ENCODE measurements at regions of chr19 and their contacts with region 1.

Region 1: GRCh38 chr19:58305065-58305931 is at the start of gene ERVK3-1:
- DNase-seq: peak; percentile 84 to 99 (median 92)
- ATAC-seq: peak; percentile 96
- H3K4me3 ChIP-seq: peak within 1 kb of the TSS; percentile 96
- H3K4me3 Mint-ChIP-seq: peak within 1 kb of the TSS; percentile 95
- H3K27ac ChIP-seq: peak within 1 kb of the TSS; percentile 93 to 97
- H3K27ac Mint-ChIP-seq: peak within 1 kb of the TSS; percentile 95
- H3K4me1 ChIP-seq: peaks cover 21% of the 10 kb centered on the region
- H3K4me1 Mint-ChIP-seq: peaks cover 52% of the 10 kb centered on the region
- H3K27me3 ChIP-seq: no peaks in the 10 kb centered on the region
- H3K27me3 Mint-ChIP-seq: no peaks in the 10 kb centered on the region
- CTCF ChIP-seq: no peak
- total RNA-seq, gene ERVK3-1: 150 to 153 TPM

Region 2: GRCh38 chr19:58067240-58067912 is 237.9 kb before region 1 on chr19:
- CTCF ChIA-PET with region 1: no interaction called
- POLR2A ChIA-PET with region 1: no interaction called
- intact Hi-C with region 1: no loop called
- DNase-seq: no peak
- ATAC-seq: no peak
- H3K4me3 ChIP-seq: no peak overlapping the region
- H3K4me3 Mint-ChIP-seq: no peak overlapping the region
- H3K27ac ChIP-seq: no peak overlapping the region
- H3K27ac Mint-ChIP-seq: no peak overlapping the region
- H3K4me1 ChIP-seq: no peaks in the 10 kb centered on the region
- H3K4me1 Mint-ChIP-seq: no peaks in the 10 kb centered on the region
- H3K27me3 ChIP-seq: no peaks in the 10 kb centered on the region
- H3K27me3 Mint-ChIP-seq: no peaks in the 10 kb centered on the region
- CTCF ChIP-seq: no peak

Region 3: GRCh38 chr19:58278157-58279041 is 26.9 kb before region 1 on chr19 and contains the start of gene ZNF8:
- CTCF ChIA-PET with region 1: no interaction called
- POLR2A ChIA-PET with region 1: interaction called, 31 read pairs
- intact Hi-C with region 1: loop called (anchors 1 kb)
- DNase-seq: peak; percentile 89 to 99 (median 96)
- ATAC-seq: peak; percentile 96
- H3K4me3 ChIP-seq: peak within 1 kb of the TSS; percentile 89
- H3K4me3 Mint-ChIP-seq: peak within 1 kb of the TSS; percentile 98
- H3K27ac ChIP-seq: peak within 1 kb of the TSS; percentile 81 to 85
- H3K27ac Mint-ChIP-seq: peak within 1 kb of the TSS; percentile 92
- H3K4me1 ChIP-seq: peaks cover 29% of the 10 kb centered on the region
- H3K4me1 Mint-ChIP-seq: peaks cover 45% of the 10 kb centered on the region
- H3K27me3 ChIP-seq: no peaks in the 10 kb centered on the region
- H3K27me3 Mint-ChIP-seq: no peaks in the 10 kb centered on the region
- CTCF ChIP-seq: no peak
- total RNA-seq, gene ZNF8: 9.5 to 9.6 TPM

Region 4: GRCh38 chr19:58326914-58327726 is 21.8 kb after region 1 on chr19 and contains the start of gene ZSCAN22:
- CTCF ChIA-PET with region 1: no interaction called
- POLR2A ChIA-PET with region 1: interaction called, 8 read pairs
- intact Hi-C with region 1: loop called (anchors 1 kb)
- DNase-seq: peak; percentile 76 to 94 (median 86)
- ATAC-seq: peak; percentile 88
- H3K4me3 ChIP-seq: peak within 1 kb of the TSS; percentile 86
- H3K4me3 Mint-ChIP-seq: no peak within 1 kb of the TSS
- H3K27ac ChIP-seq: peak within 1 kb of the TSS; percentile 65
- H3K27ac Mint-ChIP-seq: no peak within 1 kb of the TSS
- H3K4me1 ChIP-seq: peaks cover 22% of the 10 kb centered on the region
- H3K4me1 Mint-ChIP-seq: peaks cover 4% of the 10 kb centered on the region
- H3K27me3 ChIP-seq: no peaks in the 10 kb centered on the region
- H3K27me3 Mint-ChIP-seq: no peaks in the 10 kb centered on the region
- CTCF ChIP-seq: no peak
- total RNA-seq, gene ZSCAN22: 0.77 to 0.81 TPM

Region 5: DNA sequence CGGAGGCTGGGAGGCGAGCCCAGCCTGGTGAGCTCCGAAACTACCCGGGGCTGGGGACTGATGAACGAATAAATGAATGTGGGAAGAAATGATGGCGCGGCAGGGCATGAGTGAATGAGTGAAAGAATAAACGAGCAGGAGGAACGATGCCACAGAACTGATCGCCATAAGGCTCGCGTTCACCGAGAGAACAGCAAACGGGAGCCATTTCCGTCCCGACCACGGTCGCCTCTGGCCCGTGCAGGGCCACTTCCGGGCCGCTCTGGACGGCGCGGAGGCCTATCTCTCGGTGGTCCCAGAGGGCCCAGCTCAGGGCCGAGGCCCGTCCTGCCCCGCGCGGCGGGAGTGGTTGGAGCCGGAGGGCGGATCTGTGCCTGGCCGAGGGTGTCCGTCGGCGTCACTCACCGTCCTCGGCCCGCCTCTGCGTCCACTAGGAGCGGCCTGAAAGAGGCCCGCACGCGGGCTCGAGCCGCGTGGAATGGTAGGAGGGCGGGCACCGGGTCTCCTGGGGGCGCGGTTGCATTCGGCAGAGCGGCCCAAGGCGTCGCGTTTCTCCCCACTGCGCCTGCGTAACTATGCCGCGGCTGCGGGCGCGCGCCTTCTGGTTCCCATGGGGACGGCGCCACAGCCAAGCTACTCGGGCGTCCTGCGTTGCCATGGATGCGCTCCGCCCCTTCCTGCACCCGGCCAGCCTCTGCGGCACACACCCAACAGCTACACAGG is 57.1 kb after region 1 on chr19 and contains the start of gene ZNF497:
- CTCF ChIA-PET with region 1: no interaction called
- POLR2A ChIA-PET with region 1: interaction called, 5 read pairs
- intact Hi-C with region 1: loop called (anchors 1 to 2 kb)
- DNase-seq: peak; percentile 92 to 99 (median 97)
- ATAC-seq: peak; percentile 90
- H3K4me3 ChIP-seq: peak within 1 kb of the TSS; percentile 84
- H3K4me3 Mint-ChIP-seq: peak within 1 kb of the TSS; percentile 94
- H3K27ac ChIP-seq: peak within 1 kb of the TSS; percentile 58 to 69
- H3K27ac Mint-ChIP-seq: peak within 1 kb of the TSS; percentile 84
- H3K4me1 ChIP-seq: peaks cover 22% of the 10 kb centered on the region
- H3K4me1 Mint-ChIP-seq: peaks cover 12% of the 10 kb centered on the region
- H3K27me3 ChIP-seq: no peaks in the 10 kb centered on the region
- H3K27me3 Mint-ChIP-seq: no peaks in the 10 kb centered on the region
- CTCF ChIP-seq: no peak
- total RNA-seq, gene ZNF497: 0.28 to 0.55 TPM

Region 6: GRCh38 chr19:58380722-58381466 is 75.6 kb after region 1 on chr19 and contains the start of gene ZNF837:
- CTCF ChIA-PET with region 1: no interaction called
- POLR2A ChIA-PET with region 1: no interaction called
- intact Hi-C with region 1: loop called in 1 of 2 experiments (anchors 1 kb)
- DNase-seq: peak; percentile 93 to 100 (median 97)
- ATAC-seq: peak; percentile 83
- H3K4me3 ChIP-seq: peak within 1 kb of the TSS; percentile 82
- H3K4me3 Mint-ChIP-seq: peak within 1 kb of the TSS; percentile 92
- H3K27ac ChIP-seq: peak within 1 kb of the TSS; percentile 81 to 92
- H3K27ac Mint-ChIP-seq: peak within 1 kb of the TSS; percentile 86
- H3K4me1 ChIP-seq: peaks cover 43% of the 10 kb centered on the region
- H3K4me1 Mint-ChIP-seq: peaks cover 33% of the 10 kb centered on the region
- H3K27me3 ChIP-seq: no peaks in the 10 kb centered on the region
- H3K27me3 Mint-ChIP-seq: no peaks in the 10 kb centered on the region
- CTCF ChIP-seq: no peak
- total RNA-seq, gene ZNF837: 0.71 to 1.0 TPM

Region 7: DNA sequence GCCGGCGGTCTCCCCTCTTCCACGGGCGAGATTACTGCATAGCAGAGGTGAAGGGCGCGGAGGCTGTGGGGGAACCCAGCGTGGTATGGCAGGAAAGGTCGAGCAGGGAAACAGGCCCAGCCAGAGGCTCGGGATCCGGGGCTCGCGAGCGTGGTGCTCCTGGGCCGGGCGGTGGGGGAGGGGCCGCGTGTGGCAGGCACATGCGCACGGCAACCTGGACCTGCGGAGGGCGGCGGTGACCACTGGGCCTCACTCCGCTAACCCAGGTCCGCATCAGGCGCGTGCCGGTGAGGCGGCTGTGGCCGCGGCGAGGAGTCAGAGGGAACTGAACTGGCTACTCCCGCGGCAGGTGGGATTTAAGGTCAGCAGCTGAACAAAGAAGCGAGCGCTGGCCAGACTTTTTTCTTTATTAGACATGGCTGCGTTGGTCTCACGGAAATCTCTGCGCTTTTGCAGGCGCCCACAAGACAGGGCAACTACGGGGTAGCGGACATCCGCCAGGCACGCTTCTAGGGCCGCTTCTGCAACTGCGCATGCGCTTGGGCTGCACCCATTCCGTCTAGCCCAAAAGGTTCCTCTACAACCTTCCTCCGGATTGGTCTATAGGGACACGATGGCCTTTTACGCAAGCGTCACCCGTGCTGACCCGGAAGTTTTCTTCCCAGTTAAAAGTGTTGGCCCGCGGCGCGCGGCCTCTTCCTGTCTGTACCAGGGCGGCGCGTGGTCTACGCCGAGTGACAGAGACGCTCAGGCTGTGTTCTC is 81.5 kb after region 1 on chr19 and contains the start of gene RPS5:
- CTCF ChIA-PET with region 1: no interaction called
- POLR2A ChIA-PET with region 1: interaction called, 3 read pairs
- intact Hi-C with region 1: loop called in 1 of 2 experiments (anchors 1 kb)
- DNase-seq: peak; percentile 90 to 100 (median 95)
- ATAC-seq: peak; percentile 90
- H3K4me3 ChIP-seq: peak within 1 kb of the TSS; percentile 79
- H3K4me3 Mint-ChIP-seq: peak within 1 kb of the TSS; percentile 99
- H3K27ac ChIP-seq: peak within 1 kb of the TSS; percentile 93 to 97
- H3K27ac Mint-ChIP-seq: peak within 1 kb of the TSS; percentile 98
- H3K4me1 ChIP-seq: peaks cover 53% of the 10 kb centered on the region
- H3K4me1 Mint-ChIP-seq: peaks cover 47% of the 10 kb centered on the region
- H3K27me3 ChIP-seq: no peaks in the 10 kb centered on the region
- H3K27me3 Mint-ChIP-seq: no peaks in the 10 kb centered on the region
- CTCF ChIP-seq: no peak
- total RNA-seq, gene RPS5: 1,619 to 1,646 TPM

Region 8: DNA sequence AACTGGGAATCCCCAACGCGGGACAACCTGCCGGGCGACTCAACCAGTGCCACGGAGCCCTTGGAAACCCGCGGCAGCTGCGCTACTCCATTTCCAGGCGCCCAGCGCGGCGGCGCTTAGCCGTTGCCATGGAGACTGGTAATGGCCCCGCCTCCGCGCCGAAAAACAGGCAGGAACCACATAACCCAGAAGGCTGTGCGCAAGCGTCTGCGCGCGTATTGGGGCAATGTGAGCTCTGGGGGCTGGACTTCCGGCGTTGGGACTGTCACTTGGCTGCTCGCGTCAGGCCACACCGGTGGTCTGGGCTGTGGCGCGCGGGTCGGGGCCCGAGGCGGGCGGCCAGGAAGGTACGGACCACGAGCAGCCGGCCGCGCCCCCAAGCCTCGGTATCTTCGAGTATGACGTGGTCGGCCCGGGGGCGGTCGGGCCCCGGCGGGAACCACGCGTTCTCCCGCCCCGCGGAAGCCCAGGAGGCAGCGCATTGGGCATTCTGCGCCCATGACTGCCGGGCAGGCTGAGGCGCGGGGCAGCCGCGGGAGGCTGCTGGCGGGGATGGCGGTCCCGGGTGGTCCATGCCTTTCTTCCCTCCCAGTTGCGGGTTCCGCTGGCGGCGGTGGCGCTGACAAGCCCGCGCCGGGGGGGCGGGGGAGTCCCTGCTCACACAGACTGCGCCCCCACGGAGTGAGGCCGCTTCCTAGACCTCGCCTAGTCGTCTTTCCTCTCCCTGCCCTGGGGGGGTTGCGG is 146.2 kb after region 1 on chr19 and contains the start of gene ZNF324B:
- CTCF ChIA-PET with region 1: no interaction called
- POLR2A ChIA-PET with region 1: no interaction called
- intact Hi-C with region 1: loop called in 1 of 2 experiments (anchors 5 kb)
- DNase-seq: peak; percentile 92 to 98 (median 96)
- ATAC-seq: peak; percentile 97
- H3K4me3 ChIP-seq: peak within 1 kb of the TSS; percentile 66
- H3K4me3 Mint-ChIP-seq: peak within 1 kb of the TSS; percentile 85
- H3K27ac ChIP-seq: peak within 1 kb of the TSS in 1 of 2 donors; percentile 61
- H3K27ac Mint-ChIP-seq: peak within 1 kb of the TSS; percentile 63
- H3K4me1 ChIP-seq: peaks cover 15% of the 10 kb centered on the region
- H3K4me1 Mint-ChIP-seq: peaks cover 21% of the 10 kb centered on the region
- H3K27me3 ChIP-seq: peaks cover 9 to 16% of the 10 kb centered on the region in 2 experiments
- H3K27me3 Mint-ChIP-seq: peaks cover 28% of the 10 kb centered on the region
- CTCF ChIP-seq: no peak
- total RNA-seq, gene ZNF324B: 6.3 to 7.6 TPM

Region 9: GRCh38 chr19:58492265-58492664 is 187.0 kb after region 1 on chr19:
- CTCF ChIA-PET with region 1: no interaction called
- POLR2A ChIA-PET with region 1: no interaction called
- intact Hi-C with region 1: no loop called
- DNase-seq: no peak
- ATAC-seq: no peak
- H3K4me3 ChIP-seq: no peak overlapping the region
- H3K4me3 Mint-ChIP-seq: no peak overlapping the region
- H3K27ac ChIP-seq: no peak overlapping the region
- H3K27ac Mint-ChIP-seq: no peak overlapping the region
- H3K4me1 ChIP-seq: no peaks in the 10 kb centered on the region
- H3K4me1 Mint-ChIP-seq: no peaks in the 10 kb centered on the region
- H3K27me3 ChIP-seq: no peaks in the 10 kb centered on the region
- H3K27me3 Mint-ChIP-seq: no peaks in the 10 kb centered on the region
- CTCF ChIP-seq: no peak

Measured in CD4-positive, alpha-beta T cell (primary cell).